ENCODE measurements at regions of chr5 and their contacts with region 1.

Region 1: DNA sequence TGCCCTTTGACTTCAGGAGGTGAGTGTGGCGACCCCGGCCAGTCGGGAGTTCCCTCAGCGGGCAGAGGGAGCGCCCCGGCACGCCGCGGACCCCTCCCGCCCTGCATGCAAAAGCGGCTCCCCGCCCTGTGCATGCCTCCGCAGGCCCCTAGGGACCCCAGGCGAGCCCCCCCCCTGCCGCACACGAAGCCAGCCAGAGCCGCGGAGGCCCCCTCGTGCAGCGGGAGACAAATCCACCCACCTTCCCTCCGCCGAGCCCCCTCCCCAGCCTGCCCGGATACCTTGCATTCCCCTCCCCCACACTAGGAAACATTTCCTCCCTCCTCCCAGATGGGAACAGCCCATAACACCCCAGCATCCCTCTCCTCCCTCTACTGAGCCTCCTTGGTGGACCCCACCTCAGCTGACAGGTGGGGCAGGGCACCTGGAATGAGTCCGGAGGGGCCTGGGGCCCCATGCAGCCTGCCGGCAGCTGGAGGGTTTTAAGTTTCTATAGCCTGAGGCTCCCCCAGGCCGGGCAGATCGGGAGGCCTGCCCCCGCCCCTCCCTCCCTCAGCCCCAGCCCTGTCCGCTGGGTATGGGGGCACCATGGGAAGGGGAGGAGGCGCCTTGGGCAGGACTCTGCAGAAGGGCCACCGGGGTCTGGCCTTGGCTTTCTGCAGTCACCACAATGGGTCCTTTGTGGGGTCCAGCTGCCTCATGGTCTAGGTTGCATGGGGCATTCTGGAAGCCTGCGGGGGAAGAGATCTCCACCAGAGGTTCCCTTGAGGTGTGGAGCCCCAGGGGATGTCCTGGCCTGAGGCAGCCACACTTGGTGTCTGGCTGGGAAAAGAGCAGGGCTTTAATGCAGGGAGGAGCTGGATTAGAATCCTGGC is 601 bp downstream of the ERGIC1 start:
- H3K4me3 Mint-ChIP-seq: peak overlapping the region; percentile 83
- H3K27ac Mint-ChIP-seq: peak overlapping the region; percentile 89
- H3K4me1 Mint-ChIP-seq: peaks cover 69% of the 10 kb centered on the region
- H3K27me3 Mint-ChIP-seq: no peaks in the 10 kb centered on the region

Region 2: DNA sequence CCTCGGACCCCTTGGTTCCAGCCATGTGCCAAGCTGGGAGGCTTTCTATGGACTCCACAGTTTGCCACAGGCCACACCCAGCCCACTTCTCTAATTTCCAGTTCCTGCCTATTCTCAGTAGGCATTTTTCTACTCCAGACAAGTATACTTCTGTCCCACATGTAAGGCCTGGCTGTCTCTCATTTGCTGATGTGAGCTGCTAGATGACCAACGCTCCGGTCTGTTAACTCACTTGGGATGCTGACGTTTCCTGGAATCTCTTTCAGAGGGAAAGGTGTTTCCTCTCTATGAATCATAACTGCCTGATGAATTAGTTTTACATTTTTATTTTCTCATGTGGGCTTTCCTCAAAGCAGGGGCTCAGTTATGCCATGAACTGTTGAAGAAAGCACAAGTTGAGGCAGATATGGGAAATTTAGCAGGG is 35.7 kb after region 1 on chr5:
- intact Hi-C with region 1: loop called (anchors 5 kb)
- H3K4me3 Mint-ChIP-seq: no peak overlapping the region
- H3K27ac Mint-ChIP-seq: no peak overlapping the region
- H3K4me1 Mint-ChIP-seq: peaks cover 6% of the 10 kb centered on the region
- H3K27me3 Mint-ChIP-seq: no peaks in the 10 kb centered on the region